Sciatic nerve (tissue), 2 donors: ENCODE measurements at regions of chr2 and their contacts with region 1.

Region 1: DNA sequence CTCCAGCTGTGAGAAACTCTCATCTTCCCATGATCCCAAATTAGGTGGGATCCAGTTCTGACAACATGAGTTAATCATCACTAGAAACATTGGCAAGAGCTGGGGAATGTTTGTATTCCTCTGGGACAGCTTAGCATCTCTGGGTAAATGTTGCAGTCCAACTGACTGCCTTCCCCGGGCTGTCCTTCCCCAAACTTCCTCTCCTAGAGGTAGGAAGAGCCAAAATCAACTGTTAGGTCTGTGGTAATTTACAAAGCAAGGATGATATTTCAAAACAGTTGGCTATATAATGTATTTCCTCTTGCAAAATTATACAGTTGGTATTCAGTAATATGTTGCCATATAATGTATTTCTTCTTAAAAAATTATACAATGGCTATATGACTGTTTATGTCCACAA is 148.5 kb downstream of the MGAT5 start:
- DNase-seq: no peak
- ATAC-seq: peak; percentile 94

Region 2: GRCh38 chr2:134258684-134259388 is 143.6 kb before region 1 on chr2:
- intact Hi-C with region 1: loop called (anchors 10 kb)
- DNase-seq: no peak
- ATAC-seq: peak; percentile 73